PC-9 (cell line): ENCODE measurements at regions of chr15 and their contacts with region 1.

Region 1: DNA sequence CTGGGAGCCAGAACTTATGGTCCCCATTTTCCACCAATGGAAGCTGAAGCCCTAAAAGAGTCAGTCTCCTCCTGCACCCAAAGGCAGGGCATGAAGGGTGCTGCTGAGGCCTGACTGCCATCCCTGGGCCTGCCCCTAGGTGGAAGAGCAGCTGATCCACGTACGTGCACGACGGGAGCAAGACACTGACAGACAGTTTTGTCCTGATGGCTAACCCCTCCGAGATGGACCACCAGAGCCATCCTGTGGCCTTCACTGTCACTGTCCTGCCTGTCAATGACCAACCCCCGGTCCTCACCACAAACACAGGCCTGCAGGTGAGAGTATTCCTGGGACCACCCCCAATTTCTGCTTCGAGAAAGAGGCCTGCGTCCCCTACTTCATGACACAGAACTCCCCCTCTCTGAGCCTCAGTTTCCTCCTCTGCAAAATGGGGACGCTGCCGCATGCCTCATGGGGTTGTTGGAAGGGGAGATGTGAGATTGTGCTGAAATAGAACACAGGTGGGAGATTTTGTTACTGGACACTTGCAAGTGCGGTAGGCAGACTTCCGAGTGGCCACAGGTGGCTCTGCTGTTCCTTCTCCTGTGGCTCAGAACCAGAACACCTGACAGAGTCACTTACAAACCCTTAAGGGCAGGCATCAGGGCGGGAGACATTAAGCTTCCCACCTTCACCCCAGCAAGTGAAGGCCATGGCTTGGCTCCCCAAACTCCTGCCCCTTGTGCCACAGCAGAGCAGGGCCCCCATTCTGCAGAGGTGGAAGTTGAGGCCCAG is 175.3 kb downstream of the TBC1D2B start:
- DNase-seq: no peak
- H3K4me3 ChIP-seq: no peak overlapping the region
- H3K27ac ChIP-seq: no peak overlapping the region
- H3K4me1 ChIP-seq: no peaks in the 10 kb centered on the region
- H3K27me3 ChIP-seq: no peaks in the 10 kb centered on the region
- CTCF ChIP-seq: 0 out of 2 replicates have a peak, but pooled peaks have one; percentile 14

Region 2: GRCh38 chr15:77966540-77967290 is 64.6 kb after region 1 on chr15:
- CTCF ChIA-PET with region 1: interaction called, 12 read pairs
- POLR2A ChIA-PET with region 1: no interaction called
- intact Hi-C with region 1: no loop called
- DNase-seq: peak in 1 of 2 experiments; percentile 38
- H3K4me3 ChIP-seq: no peak overlapping the region
- H3K27ac ChIP-seq: no peak overlapping the region
- H3K4me1 ChIP-seq: peaks cover 13% of the 10 kb centered on the region
- H3K27me3 ChIP-seq: no peaks in the 10 kb centered on the region
- CTCF ChIP-seq: peak; percentile 87

Region 3: DNA sequence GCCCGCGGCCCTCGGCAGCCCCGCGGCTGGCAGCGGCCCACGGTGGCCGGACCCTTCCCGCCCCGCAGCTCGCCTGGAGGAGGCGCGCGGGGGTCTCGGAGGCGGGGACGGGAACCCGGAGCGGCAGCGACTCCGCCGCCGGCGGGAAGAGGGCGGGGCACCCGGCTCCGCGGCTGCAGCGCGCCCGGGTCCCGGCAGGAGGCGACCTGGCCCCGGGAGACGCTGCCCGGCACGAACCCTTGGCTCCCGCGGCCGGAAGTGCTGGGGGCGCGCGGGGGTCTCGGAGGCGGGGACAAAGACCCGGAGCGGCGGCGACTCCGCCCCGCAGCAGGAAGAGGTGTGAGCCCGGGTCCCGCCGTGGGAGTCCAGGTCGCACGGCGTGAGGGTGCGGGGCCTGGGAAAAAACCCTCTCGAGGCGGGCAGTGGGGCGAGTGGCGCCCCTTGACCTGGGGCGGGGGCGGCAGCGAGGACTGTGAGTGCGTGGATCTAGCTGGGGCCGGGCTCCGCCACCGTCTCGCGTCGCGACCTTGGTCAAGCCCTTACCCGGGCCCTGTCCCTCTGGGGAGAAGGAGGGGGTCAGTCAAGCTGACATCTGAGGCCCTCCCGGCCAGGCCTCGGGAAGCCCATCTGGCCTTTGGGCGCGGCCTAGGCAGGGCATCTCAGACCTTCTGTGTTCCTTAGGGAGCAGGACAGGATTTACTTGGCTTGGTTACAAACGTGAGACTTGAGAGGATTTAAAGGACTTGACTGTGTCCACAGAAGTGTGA is 229.3 kb after region 1 on chr15 and contains the start of gene CIB2:
- CTCF ChIA-PET with region 1: no interaction called
- POLR2A ChIA-PET with region 1: no interaction called
- intact Hi-C with region 1: no loop called
- DNase-seq: peak; percentile 49 to 72
- H3K4me3 ChIP-seq: peak within 1 kb of the TSS; percentile 93
- H3K27ac ChIP-seq: no peak within 1 kb of the TSS
- H3K4me1 ChIP-seq: peaks cover 36% of the 10 kb centered on the region
- H3K27me3 ChIP-seq: no peaks in the 10 kb centered on the region
- CTCF ChIP-seq: peak; percentile 70
- total RNA-seq, gene CIB2: 5.6 and 5.8 TPM in 2 replicates